GM13977 (cell line): ENCODE measurements at regions of chr3 and their contacts with region 1.

Region 1: DNA sequence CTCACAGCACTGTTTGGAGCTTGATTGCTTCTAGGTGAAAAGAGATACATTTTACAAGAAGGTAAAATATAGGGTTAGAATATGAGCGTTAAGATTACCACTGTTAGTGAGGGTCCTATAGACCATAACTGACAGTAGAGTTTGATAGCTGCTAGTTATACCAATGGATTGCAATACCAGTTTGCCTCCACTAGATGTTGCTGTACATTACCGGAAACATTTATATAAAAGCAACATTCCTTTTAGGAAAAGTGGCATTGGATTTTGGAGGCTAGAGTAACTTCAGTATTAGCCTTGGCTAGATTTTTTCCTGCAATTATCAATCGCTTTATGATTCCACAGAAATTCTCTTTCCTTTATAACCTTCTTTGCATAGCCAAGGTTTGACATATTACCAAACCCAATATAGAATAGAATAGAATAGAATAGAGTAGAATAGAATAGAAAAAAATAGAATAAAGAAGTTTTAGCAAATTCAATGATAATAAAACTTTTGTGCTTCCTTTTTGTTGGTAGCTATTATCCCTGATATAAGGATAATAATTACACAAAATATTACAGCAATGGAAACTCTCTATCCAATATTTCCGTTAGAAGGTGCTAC is 1093.6 kb upstream of the ALCAM start:
- DNase-seq: peak; percentile 3
- CTCF ChIP-seq: peak; percentile 68

Region 2: GRCh38 chr3:104145164-104145563 is 128.0 kb before region 1 on chr3:
- in situ Hi-C with region 1: no loop called
- DNase-seq: no peak
- CTCF ChIP-seq: no peak

Region 3: GRCh38 chr3:105366326-105367062 is 1093.3 kb after region 1 on chr3 and contains the start of gene ALCAM:
- in situ Hi-C with region 1: loop called (anchors 5 kb)
- DNase-seq: peak; percentile 71
- CTCF ChIP-seq: peak; percentile 73

Region 4: GRCh38 chr3:105518806-105519418 is 1245.8 kb after region 1 on chr3:
- in situ Hi-C with region 1: loop called (anchors 25 kb)
- DNase-seq: peak; percentile 43
- CTCF ChIP-seq: peak; percentile 53